PC-9 (cell line): ENCODE measurements at regions of chr2 and their contacts with region 1.

Region 1: DNA sequence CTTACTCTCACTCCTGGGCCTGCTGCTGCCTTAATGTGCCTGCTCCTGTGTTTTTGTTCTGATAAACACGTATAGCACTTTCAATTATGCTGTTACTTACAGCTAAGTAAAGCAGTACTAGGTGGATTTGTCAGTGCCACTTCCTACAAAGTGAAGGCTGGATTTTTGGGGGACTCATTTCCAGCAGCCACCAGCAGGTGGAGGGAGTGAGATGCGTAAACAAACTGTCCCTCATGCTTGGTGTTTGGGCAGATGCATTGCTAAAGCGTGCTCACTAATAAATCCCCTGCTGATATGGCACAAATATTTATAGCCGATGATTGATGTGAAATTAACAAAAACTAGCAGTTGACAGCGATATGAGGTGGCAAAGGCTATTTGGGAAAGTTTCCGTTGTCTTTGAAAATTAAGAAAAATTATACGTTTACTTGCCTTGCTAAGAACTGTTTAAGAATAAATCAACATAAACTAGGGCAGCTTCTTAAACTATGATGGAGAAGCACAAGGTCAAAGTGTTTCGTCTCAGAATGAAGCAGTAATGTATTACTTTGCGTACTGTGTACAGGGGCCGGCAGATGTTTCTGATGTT is 101.7 kb downstream of the AGAP1 start:
- DNase-seq: peak; percentile 71 to 83
- H3K4me3 ChIP-seq: no peak overlapping the region
- H3K27ac ChIP-seq: no peak overlapping the region
- H3K4me1 ChIP-seq: no peaks in the 10 kb centered on the region
- H3K27me3 ChIP-seq: no peaks in the 10 kb centered on the region
- CTCF ChIP-seq: peak; percentile 98

Region 2: DNA sequence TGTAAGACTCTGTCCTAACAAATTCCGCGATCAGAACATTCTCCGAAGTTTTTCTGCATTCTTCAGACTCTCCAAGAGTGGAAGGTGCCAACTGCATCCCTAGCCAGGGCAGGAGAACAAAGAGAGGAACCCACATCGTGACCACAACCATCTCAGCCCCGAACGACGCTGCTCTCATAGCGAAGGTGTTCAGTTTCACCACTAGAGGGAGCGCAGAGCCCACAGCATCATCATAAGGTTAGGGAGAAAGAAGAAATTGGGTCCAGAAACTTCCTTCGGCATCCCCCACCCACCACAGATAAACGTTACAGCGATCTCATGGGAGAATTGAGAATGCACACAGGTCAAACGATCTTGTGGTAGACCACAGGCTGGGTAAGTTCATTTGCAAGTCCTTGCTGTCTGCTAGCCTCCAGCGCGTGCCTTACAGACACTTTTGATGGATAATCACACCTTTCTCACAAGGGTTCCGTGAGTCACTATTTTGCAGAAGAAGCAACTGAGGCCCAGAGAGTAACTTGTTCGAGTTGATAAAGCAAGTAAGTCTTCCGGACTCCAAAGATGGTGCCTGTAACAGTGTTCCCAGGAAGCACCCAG is 1044.9 kb before region 1 on chr2:
- CTCF ChIA-PET with region 1: no interaction called
- POLR2A ChIA-PET with region 1: no interaction called
- intact Hi-C with region 1: loop called (anchors 10 kb)
- DNase-seq: peak; percentile 74 to 85
- H3K4me3 ChIP-seq: no peak overlapping the region
- H3K27ac ChIP-seq: no peak overlapping the region
- H3K4me1 ChIP-seq: peaks cover 11% of the 10 kb centered on the region
- H3K27me3 ChIP-seq: no peaks in the 10 kb centered on the region
- CTCF ChIP-seq: peak; percentile 99

Region 3: DNA sequence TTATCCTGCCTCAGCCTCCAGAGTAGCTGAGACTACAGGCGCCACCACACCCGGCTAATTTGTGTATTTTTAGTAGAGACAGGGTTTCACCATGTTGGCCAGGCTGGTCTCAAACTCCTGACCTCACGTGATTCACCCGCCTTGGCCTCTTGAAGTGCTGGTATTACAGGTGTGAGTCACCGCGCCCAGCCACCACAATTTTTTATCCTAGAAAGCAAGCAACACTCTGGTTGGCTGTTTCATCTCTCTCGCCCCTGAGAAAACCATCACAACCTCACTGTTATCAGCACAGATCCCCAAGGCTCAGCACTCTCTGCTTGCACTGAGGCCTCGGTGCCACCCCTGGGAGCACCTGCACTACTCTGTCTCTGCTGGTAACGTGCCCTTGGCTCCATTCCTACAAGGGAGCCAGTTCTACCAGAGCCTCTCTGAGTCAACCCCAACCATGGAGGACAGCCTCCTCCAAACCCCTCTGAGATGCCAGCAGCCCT is 236.5 kb before region 1 on chr2:
- CTCF ChIA-PET with region 1: no interaction called
- POLR2A ChIA-PET with region 1: no interaction called
- intact Hi-C with region 1: loop called (anchors 1 kb)
- DNase-seq: peak; percentile 91 to 96
- H3K4me3 ChIP-seq: no peak overlapping the region
- H3K27ac ChIP-seq: peak overlapping the region; percentile 23; the same call in 1 of the 2 replicates
- H3K4me1 ChIP-seq: peaks cover 28% of the 10 kb centered on the region
- H3K27me3 ChIP-seq: no peaks in the 10 kb centered on the region
- CTCF ChIP-seq: no peak

Region 4: GRCh38 chr2:235493775-235494715 is 101.5 kb before region 1 on chr2 and contains the start of gene AGAP1:
- CTCF ChIA-PET with region 1: interaction called, 3 read pairs
- POLR2A ChIA-PET with region 1: no interaction called
- intact Hi-C with region 1: loop called (anchors 1 kb)
- DNase-seq: peak; percentile 75 to 97
- H3K4me3 ChIP-seq: peak within 1 kb of the TSS; percentile 77
- H3K27ac ChIP-seq: peak within 1 kb of the TSS; percentile 69
- H3K4me1 ChIP-seq: peaks cover 20% of the 10 kb centered on the region
- H3K27me3 ChIP-seq: no peaks in the 10 kb centered on the region
- CTCF ChIP-seq: no peak
- total RNA-seq, gene AGAP1: 91.4 and 107 TPM in 2 replicates

Region 5: GRCh38 chr2:235551965-235552364 is 43.6 kb before region 1 on chr2:
- CTCF ChIA-PET with region 1: interaction called, 4 read pairs
- POLR2A ChIA-PET with region 1: no interaction called
- intact Hi-C with region 1: loop called (anchors 2 kb)
- DNase-seq: peak; percentile 74 to 82
- H3K4me3 ChIP-seq: no peak overlapping the region
- H3K27ac ChIP-seq: 0 out of 2 replicates have a peak overlapping the region, but pooled peaks have one; percentile 13
- H3K4me1 ChIP-seq: peaks cover 42% of the 10 kb centered on the region
- H3K27me3 ChIP-seq: no peaks in the 10 kb centered on the region
- CTCF ChIP-seq: peak; percentile 71

Region 6: DNA sequence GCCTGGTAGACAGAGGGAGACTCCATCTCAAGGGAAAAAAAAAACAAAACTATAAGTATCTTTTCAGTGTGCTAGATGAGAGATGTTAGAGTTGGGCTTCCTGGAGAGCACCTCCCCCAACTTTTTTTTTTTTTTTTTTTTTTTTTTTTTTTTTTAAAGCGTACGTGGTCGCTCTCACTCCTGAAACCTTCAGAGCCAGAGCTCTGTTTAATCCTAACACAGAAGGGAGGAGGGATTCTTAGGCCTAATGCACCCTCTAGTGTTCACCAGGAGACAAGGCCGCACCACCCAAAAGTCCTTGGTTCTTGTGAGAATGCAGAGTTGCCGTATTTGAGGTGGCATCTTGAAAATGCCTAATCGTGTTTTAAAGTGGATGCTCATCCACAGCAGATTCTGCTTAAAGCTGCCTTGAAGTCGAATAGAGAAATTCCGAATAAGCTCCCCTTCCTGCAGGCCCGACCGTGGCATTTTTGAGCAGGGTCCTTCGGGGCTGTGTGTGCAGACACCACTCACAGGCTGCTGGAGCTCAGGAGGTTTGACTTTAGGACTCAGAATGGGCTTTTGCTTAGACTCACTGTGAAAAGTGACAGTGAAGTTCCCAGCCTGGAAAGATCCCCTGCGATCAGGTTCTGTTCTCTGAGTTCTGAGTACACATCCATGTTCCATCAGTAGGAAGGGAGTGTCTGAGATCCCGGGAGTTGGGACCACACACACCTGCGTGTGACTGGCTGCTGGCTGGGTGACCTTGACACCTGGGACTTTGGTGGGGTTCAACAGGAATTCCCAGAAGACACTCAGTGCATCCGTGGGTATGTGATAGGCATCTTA is 151.0 kb after region 1 on chr2:
- CTCF ChIA-PET with region 1: interaction called, 35 read pairs
- POLR2A ChIA-PET with region 1: interaction called, 20 read pairs
- intact Hi-C with region 1: loop called (anchors 1 kb)
- DNase-seq: peak; percentile 80 to 87
- H3K4me3 ChIP-seq: no peak overlapping the region
- H3K27ac ChIP-seq: no peak overlapping the region
- H3K4me1 ChIP-seq: peaks cover 15% of the 10 kb centered on the region
- H3K27me3 ChIP-seq: no peaks in the 10 kb centered on the region
- CTCF ChIP-seq: peak; percentile 95